ENCODE measurements at regions of chr2 and their contacts with region 1.

Region 1: GRCh38 chr2:119366649-119367471 is at the starts of genes C2orf76 and DBI:
- DNase-seq: peak; percentile 95 to 98
- ATAC-seq: peak; percentile 94 to 96 (median 96)
- H3K4me3 ChIP-seq: peak within 1 kb of the TSS; percentile 85
- H3K27ac ChIP-seq: peak within 1 kb of the TSS; percentile 98
- H3K4me1 ChIP-seq: peaks cover 29% of the 10 kb centered on the region
- H3K27me3 ChIP-seq: no peaks in the 10 kb centered on the region
- CTCF ChIP-seq: no peak
- total RNA-seq, gene C2orf76: 4.1 to 7.2 (median 6.0) TPM
- total RNA-seq, gene DBI: 50.6 to 88.7 (median 53.4) TPM

Region 2: DNA sequence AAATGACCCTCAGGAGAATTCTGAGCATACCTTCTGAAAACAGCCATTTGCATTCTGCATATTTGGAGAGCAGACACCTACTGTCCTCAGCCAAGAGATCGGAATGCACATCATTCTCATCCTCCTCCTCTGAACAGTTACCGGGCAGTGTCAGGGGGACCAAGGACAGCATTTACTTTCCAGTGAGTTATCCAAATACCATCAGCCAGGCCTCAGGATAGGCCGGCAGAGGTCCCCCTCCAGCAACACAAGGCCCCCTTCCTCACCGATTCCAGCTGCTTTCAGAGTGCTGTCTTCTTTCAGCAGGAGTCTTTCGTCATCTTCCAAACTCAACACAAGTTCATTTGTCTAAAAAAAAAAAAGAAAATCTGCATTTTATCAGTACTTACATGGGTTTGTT is 55.5 kb before region 1 on chr2:
- intact Hi-C with region 1: loop called in 1 of 2 experiments (anchors 5 kb)
- DNase-seq: no peak
- ATAC-seq: no peak
- H3K4me3 ChIP-seq: no peak overlapping the region
- H3K27ac ChIP-seq: no peak overlapping the region
- H3K4me1 ChIP-seq: peaks cover 11% of the 10 kb centered on the region
- H3K27me3 ChIP-seq: no peaks in the 10 kb centered on the region
- CTCF ChIP-seq: no peak

Region 3: GRCh38 chr2:119326938-119327337 is 39.9 kb before region 1 on chr2:
- intact Hi-C with region 1: loop called in 1 of 2 experiments (anchors 5 kb)
- DNase-seq: no peak
- ATAC-seq: no peak
- H3K4me3 ChIP-seq: no peak overlapping the region
- H3K27ac ChIP-seq: no peak overlapping the region
- H3K4me1 ChIP-seq: no peaks in the 10 kb centered on the region
- H3K27me3 ChIP-seq: no peaks in the 10 kb centered on the region
- CTCF ChIP-seq: no peak

Region 4: DNA sequence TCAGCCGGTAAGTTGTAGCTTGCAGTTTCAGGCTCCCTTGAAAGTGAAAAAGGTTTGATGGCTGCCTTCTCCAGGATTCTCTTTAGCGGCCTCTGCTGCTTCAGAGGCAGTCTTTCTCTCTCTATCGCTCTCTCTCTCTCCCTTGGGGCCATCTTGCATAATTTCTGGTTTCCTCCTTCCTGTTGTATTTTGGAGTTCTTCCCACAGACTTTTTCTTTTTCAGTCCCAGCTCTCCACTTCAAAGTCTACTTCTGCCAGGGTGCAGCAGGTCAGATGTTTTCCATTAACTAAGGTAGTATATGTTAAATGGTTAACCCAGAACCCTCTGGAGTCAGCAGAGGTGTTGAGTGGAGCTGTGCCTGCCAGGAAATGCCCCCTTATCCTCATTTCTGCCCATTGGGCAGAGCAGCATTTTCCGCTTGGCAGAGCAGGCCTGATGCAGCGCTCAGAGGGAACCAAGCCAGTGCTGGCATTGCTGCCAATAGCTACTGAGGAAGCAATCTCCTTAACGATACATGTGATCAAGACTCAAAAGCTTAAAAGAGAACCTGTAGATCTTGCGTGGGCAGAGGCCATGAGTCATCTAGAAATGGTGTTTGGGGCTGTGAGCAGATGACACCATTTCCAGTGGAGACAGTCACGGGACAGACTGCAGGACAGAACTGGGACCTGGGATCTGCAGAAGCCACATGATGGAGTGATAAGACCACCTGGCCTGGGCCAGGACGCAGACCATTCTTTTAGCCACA is 20.7 kb after region 1 on chr2:
- intact Hi-C with region 1: no loop called
- DNase-seq: peak; percentile 67 to 74
- ATAC-seq: peak; percentile 39 to 76 (median 66)
- H3K4me3 ChIP-seq: no peak overlapping the region
- H3K27ac ChIP-seq: no peak overlapping the region
- H3K4me1 ChIP-seq: peaks cover 6% of the 10 kb centered on the region
- H3K27me3 ChIP-seq: no peaks in the 10 kb centered on the region
- CTCF ChIP-seq: no peak

Region 5: DNA sequence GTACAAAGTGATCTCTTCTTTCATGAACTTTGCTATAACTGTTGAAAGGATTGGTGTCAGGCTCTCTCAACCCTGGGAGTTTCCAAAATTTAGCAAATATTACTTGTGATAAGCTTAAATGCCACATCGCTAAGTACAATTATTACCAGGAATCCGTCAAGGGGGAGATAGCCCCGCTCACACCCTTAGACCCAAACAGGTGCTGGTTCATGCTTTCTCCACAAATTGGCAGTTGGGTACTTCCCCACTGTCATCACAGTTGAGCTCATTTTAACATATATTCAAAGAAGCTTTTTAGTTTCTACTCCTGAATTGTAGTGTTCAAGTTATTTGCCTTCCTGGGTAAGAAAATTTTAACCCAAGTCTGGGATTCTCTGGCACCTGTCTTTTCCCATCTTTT is 616.2 kb after region 1 on chr2:
- intact Hi-C with region 1: no loop called
- DNase-seq: no peak
- ATAC-seq: no peak
- H3K4me3 ChIP-seq: no peak overlapping the region
- H3K27ac ChIP-seq: no peak overlapping the region
- H3K4me1 ChIP-seq: no peaks in the 10 kb centered on the region
- H3K27me3 ChIP-seq: no peaks in the 10 kb centered on the region
- CTCF ChIP-seq: no peak